ENCODE measurements at regions of chr2 and their contacts with region 1.

Region 1: DNA sequence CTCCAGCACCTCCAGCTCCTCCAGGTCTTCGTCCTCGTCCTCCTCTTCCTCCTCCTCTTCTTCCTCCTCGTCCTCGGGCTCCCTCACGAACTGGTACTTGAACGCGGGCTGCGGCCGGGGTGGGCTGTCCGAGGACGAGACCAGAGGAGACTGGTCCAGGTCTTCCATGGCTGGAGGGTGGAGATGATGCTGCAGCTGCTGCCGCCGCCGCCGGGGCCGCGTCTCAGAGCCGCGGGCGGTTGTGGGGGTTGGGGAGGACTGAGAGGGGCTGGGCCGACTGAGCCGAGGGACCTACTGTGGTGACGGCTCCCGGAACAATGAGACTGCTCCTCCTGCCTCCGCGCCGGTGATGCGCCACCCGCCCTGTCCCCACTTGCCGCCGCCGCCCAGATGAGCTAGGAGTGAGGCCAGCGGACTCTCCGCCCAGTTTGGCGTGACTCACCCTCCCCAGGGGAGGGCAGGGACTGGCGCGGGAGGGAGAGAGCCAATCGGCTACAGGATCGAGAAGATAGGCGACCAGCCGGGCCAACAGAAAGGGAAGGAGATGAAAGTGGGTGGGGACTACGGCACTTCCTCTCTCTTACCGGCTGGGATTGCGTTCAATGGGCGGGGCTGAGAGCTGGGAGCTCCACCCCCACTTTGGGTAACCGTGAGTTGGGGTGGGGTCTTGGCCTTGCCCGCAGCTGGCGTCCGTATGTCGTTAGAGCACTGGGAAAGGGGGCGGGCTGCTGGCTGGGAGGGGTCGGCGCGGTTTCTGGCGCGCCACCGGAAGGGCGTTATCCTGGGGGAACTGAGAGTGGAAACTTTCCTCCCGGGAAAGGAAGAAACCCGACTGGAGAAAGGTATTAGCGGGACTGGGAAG is at the start of gene RTN4:
- DNase-seq: peak; percentile 99
- ATAC-seq: peak; percentile 92
- H3K4me3 Mint-ChIP-seq: peak within 1 kb of the TSS; percentile 100
- H3K27ac Mint-ChIP-seq: peak within 1 kb of the TSS; percentile 100
- H3K4me1 Mint-ChIP-seq: peaks cover 61% of the 10 kb centered on the region
- H3K27me3 Mint-ChIP-seq: no peaks in the 10 kb centered on the region
- total RNA-seq, gene RTN4: 90.3 to 93.9 TPM

Region 2: GRCh38 chr2:55010149-55010591 is 40.2 kb before region 1 on chr2:
- CTCF ChIA-PET with region 1: interaction called, 20 read pairs
- POLR2A ChIA-PET with region 1: interaction called, 6 read pairs
- DNase-seq: peak; percentile 66
- ATAC-seq: peak; percentile 98
- H3K4me3 Mint-ChIP-seq: peak overlapping the region; percentile 84
- H3K27ac Mint-ChIP-seq: peak overlapping the region; percentile 90
- H3K4me1 Mint-ChIP-seq: peaks cover 56% of the 10 kb centered on the region
- H3K27me3 Mint-ChIP-seq: no peaks in the 10 kb centered on the region

Region 3: GRCh38 chr2:55014962-55015939 is 35.1 kb before region 1 on chr2:
- CTCF ChIA-PET with region 1: interaction called, 20 read pairs
- POLR2A ChIA-PET with region 1: interaction called, 4 read pairs
- DNase-seq: peak; percentile 49
- ATAC-seq: no peak
- H3K4me3 Mint-ChIP-seq: no peak overlapping the region
- H3K27ac Mint-ChIP-seq: no peak overlapping the region
- H3K4me1 Mint-ChIP-seq: peaks cover 31% of the 10 kb centered on the region
- H3K27me3 Mint-ChIP-seq: no peaks in the 10 kb centered on the region

Region 4: DNA sequence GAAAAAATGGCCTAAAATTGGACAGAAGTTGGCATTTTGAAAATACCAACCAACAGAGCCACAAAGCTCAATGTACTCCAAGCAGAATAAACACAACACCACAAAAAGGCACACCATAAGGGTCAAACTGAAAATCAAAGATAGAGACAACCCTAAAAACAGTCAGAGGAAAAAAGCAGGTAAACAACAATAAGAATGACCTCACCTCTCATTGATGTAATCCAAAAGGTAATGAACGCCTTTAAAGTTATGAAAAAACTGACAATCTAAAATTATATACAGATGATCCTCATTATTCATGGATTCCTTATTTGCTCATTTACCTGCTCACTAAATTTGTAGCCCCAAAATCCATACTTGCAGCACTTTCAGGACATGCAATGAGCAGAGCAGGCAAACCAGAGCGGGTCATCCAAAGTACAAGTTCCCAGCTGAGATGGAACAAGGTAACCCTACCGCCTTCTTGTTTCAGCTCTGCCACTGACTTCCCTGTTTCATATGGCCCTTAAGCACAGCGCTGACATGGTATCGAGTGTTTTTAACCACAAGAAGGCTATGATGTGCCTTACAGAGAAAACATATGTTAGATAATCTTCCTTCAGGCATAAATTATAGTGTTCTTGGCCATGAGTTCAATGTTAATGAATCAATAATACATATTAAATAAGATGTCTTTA is 17.2 kb before region 1 on chr2:
- CTCF ChIA-PET with region 1: interaction called, 20 read pairs
- POLR2A ChIA-PET with region 1: interaction called, 12 read pairs
- DNase-seq: peak; percentile 36
- ATAC-seq: peak; percentile 76
- H3K4me3 Mint-ChIP-seq: no peak overlapping the region
- H3K27ac Mint-ChIP-seq: no peak overlapping the region
- H3K4me1 Mint-ChIP-seq: peaks cover 37% of the 10 kb centered on the region
- H3K27me3 Mint-ChIP-seq: no peaks in the 10 kb centered on the region

Region 5: GRCh38 chr2:55038428-55038827 is 11.9 kb before region 1 on chr2:
- CTCF ChIA-PET with region 1: interaction called, 20 read pairs
- POLR2A ChIA-PET with region 1: interaction called, 12 read pairs
- DNase-seq: no peak
- ATAC-seq: no peak
- H3K4me3 Mint-ChIP-seq: no peak overlapping the region
- H3K27ac Mint-ChIP-seq: no peak overlapping the region
- H3K4me1 Mint-ChIP-seq: peaks cover 41% of the 10 kb centered on the region
- H3K27me3 Mint-ChIP-seq: no peaks in the 10 kb centered on the region

Region 6: GRCh38 chr2:55168221-55169154 is 118.1 kb after region 1 on chr2:
- CTCF ChIA-PET with region 1: interaction called, 36 read pairs
- POLR2A ChIA-PET with region 1: no interaction called
- DNase-seq: peak; percentile 50
- ATAC-seq: no peak
- H3K4me3 Mint-ChIP-seq: no peak overlapping the region
- H3K27ac Mint-ChIP-seq: no peak overlapping the region
- H3K4me1 Mint-ChIP-seq: no peaks in the 10 kb centered on the region
- H3K27me3 Mint-ChIP-seq: no peaks in the 10 kb centered on the region

Region 7: GRCh38 chr2:55232084-55232862 is 181.9 kb after region 1 on chr2 and contains the starts of genes CLHC1 and RPS27A:
- CTCF ChIA-PET with region 1: no interaction called
- POLR2A ChIA-PET with region 1: interaction called, 12 read pairs
- DNase-seq: peak; percentile 94
- ATAC-seq: peak; percentile 80
- H3K4me3 Mint-ChIP-seq: peak within 1 kb of the TSS; percentile 100
- H3K27ac Mint-ChIP-seq: peak within 1 kb of the TSS; percentile 97
- H3K4me1 Mint-ChIP-seq: peaks cover 63% of the 10 kb centered on the region
- H3K27me3 Mint-ChIP-seq: no peaks in the 10 kb centered on the region
- total RNA-seq, gene CLHC1: 6.3 to 8.5 TPM
- total RNA-seq, gene RPS27A: 889 to 959 TPM

Measured in activated CD8-positive, alpha-beta T cell treated with anti-CD3 and anti-CD28 coated beads, Interleukin-2, amount 10 ng/mL, durations not matched to agents 7 days and 5 days (primary cell).